A549 (cell line): ENCODE measurements at regions of chr11 and their contacts with region 1.

Region 1: DNA sequence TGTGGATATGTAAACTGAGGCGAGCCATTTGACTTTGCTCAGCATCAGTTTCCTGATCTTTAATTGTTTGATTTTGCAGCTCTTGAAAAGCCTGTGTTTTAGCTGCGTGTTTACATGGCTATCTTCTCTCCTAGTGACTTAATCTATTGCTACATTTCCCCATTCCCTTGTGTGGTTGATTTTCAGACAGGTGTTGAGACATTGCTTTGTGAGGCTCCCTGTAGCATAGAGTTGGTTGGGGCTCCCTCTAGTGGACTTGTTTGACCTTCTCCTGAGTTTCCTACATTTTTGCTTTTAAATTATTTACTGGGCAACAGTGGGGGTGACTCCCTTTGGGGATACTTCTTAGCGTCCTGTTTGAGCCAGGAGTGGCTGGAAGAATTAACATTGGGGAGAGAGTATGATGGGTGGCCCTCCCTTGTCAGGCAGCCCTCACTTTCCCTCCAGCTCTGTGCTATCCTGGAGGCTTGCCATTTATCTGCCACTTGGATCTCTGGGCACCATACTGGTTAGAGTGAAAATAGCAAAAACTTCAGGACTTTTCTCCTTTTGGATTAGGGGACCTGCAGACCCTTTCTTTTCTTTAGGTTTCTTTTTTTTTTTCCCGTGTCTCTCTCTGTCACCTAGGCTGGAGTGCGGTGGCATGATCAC is 9.2 kb upstream of the CBL start:
- DNase-seq: peak; percentile 80 to 82
- ATAC-seq: peak; percentile 88 to 89
- H3K4me3 ChIP-seq: no peak overlapping the region
- H3K27ac ChIP-seq: no peak overlapping the region
- H3K4me1 ChIP-seq: no peaks in the 10 kb centered on the region
- CTCF ChIP-seq: peak; percentile 76
- EP300 ChIP-seq: no peak
- POLR2A ChIP-seq: no peak
- RAD21 ChIP-seq: peak; percentile 68 to 80

Region 2: GRCh38 chr11:119101759-119102423 is 95.1 kb before region 1 on chr11 and contains the start of gene DPAGT1:
- CTCF ChIA-PET with region 1: interaction called, 11 read pairs
- POLR2A ChIA-PET with region 1: no interaction called
- DNase-seq: peak; percentile 74 to 98
- ATAC-seq: peak; percentile 90 to 92
- H3K4me3 ChIP-seq: peak within 1 kb of the TSS; percentile 78
- H3K27ac ChIP-seq: peak within 1 kb of the TSS; percentile 90 to 98
- H3K4me1 ChIP-seq: peaks cover 26% of the 10 kb centered on the region
- CTCF ChIP-seq: no peak
- EP300 ChIP-seq: no peak; a peak in 1 of 5 replicates
- POLR2A ChIP-seq: peak; percentile 34; the same call in 1 of the 2 replicates
- RAD21 ChIP-seq: no peak
- polyA plus RNA-seq, gene DPAGT1: 81.4 and 86.9 TPM in 2 replicates

Region 3: DNA sequence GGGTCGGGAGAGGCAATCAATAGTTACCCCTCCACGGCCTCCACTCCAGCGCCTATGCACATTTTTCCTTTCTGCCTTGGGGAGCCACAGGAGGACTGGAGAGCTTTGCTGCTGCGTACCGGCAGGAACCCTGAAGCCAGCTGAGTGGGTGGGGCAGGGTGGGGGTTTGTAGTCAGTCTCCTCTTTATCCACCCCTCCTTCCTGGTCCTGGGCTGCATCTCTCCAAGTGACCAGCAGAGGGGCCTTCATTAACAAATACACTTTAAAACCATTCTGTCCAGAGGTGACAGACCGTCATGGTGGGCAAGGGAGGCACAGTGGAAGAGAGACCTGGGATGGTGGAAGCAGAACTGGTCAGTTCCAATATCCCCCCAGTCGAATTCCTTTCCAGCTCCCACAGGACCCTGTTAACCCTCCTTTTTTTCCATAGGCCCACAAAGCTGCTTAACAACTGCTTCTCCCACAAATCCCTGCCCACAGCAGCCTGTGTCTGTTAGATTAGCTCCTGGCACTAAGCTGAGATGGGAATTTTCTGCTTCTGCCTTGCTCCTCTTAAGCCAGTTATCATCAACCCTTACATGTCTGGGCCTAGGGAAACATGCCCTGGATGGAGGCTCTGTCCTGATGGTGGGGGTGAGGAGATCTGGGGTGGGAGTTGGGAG is 52.0 kb before region 1 on chr11:
- CTCF ChIA-PET with region 1: interaction called, 39 read pairs
- POLR2A ChIA-PET with region 1: no interaction called
- DNase-seq: peak; percentile 81 to 90
- ATAC-seq: peak; percentile 90 to 93
- H3K4me3 ChIP-seq: no peak overlapping the region
- H3K27ac ChIP-seq: peak overlapping the region; percentile 45 to 60; a peak in 2 of 6 replicates
- H3K4me1 ChIP-seq: 0 out of 3 replicates have a peak, but pooled peaks cover 4% of the 10 kb centered on the region
- CTCF ChIP-seq: peak; percentile 44
- EP300 ChIP-seq: no peak
- POLR2A ChIP-seq: no peak
- RAD21 ChIP-seq: peak; percentile 37 to 41; a peak in 3 of 5 replicates

Region 4: DNA sequence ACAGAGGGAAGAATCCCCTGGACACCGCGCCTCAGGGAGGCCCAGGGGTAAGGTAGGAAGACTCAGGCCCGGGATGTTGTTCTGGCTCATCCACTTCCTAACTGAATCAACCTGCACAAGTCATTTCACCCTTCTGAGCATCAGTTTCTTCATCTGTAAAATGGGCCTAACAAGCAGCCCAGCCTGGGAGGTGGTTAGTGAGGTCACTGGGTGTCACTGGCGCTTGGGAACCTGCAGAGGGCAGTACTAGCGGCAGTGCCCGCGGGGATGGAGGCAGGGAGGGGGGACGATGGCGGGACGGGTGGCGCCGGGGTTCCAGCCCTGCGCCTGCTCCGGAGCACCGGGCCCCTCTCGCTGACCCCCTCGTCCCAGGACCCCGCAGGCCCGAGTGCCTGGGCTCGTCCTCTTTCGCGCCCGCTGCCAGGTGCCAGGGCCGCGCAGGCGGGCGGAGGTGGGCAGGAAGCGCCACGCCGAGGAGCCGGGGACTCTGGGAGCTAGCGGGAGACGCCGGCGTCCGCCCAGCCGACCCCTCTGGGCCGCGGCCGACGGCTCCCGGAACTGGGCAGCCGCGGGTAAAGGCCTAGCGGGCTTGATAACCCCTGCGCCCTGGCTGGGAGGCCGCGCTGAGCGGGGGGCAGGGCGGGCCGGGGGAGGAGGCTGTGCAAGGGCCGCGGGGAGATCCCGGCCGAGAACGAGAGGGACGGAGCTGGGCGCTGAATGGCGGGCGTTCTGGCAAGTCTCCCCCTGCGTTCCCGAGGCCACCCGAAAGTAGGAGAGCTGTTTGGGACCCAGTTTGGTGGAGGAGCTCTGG is 28.3 kb before region 1 on chr11 and contains the start of gene NLRX1:
- CTCF ChIA-PET with region 1: interaction called, 25 read pairs
- POLR2A ChIA-PET with region 1: interaction called, 4 read pairs
- DNase-seq: peak; percentile 86 to 87
- ATAC-seq: peak; percentile 92
- H3K4me3 ChIP-seq: peak within 1 kb of the TSS; percentile 75
- H3K27ac ChIP-seq: peak within 1 kb of the TSS; percentile 95 to 99
- H3K4me1 ChIP-seq: peaks cover 16% of the 10 kb centered on the region
- CTCF ChIP-seq: peak; percentile 73
- EP300 ChIP-seq: no peak
- POLR2A ChIP-seq: peak; percentile 84
- RAD21 ChIP-seq: peak; percentile 15 to 30; a peak in 1 of 5 replicates
- polyA plus RNA-seq, gene NLRX1: 8.4 and 10.4 TPM in 2 replicates

Region 5: GRCh38 chr11:119185981-119186634 is 10.8 kb before region 1 on chr11:
- CTCF ChIA-PET with region 1: interaction called, 21 read pairs
- POLR2A ChIA-PET with region 1: no interaction called
- DNase-seq: no peak
- ATAC-seq: no peak
- H3K4me3 ChIP-seq: no peak overlapping the region
- H3K27ac ChIP-seq: no peak overlapping the region; a peak in 1 of 6 replicates
- H3K4me1 ChIP-seq: peaks cover 13% of the 10 kb centered on the region
- CTCF ChIP-seq: no peak
- EP300 ChIP-seq: no peak
- POLR2A ChIP-seq: no peak
- RAD21 ChIP-seq: no peak

Region 6: GRCh38 chr11:119218141-119218878 is 21.4 kb after region 1 on chr11:
- CTCF ChIA-PET with region 1: interaction called, 13 read pairs
- POLR2A ChIA-PET with region 1: no interaction called
- DNase-seq: peak; percentile 68 to 70
- ATAC-seq: peak; percentile 98 to 99
- H3K4me3 ChIP-seq: no peak overlapping the region
- H3K27ac ChIP-seq: peak overlapping the region; percentile 60 to 71; a peak in 5 of 6 replicates
- H3K4me1 ChIP-seq: peaks cover 28% of the 10 kb centered on the region
- CTCF ChIP-seq: no peak
- EP300 ChIP-seq: no peak
- POLR2A ChIP-seq: no peak
- RAD21 ChIP-seq: no peak